ENCODE measurements at regions of chr18 and their contacts with region 1.

Region 1: DNA sequence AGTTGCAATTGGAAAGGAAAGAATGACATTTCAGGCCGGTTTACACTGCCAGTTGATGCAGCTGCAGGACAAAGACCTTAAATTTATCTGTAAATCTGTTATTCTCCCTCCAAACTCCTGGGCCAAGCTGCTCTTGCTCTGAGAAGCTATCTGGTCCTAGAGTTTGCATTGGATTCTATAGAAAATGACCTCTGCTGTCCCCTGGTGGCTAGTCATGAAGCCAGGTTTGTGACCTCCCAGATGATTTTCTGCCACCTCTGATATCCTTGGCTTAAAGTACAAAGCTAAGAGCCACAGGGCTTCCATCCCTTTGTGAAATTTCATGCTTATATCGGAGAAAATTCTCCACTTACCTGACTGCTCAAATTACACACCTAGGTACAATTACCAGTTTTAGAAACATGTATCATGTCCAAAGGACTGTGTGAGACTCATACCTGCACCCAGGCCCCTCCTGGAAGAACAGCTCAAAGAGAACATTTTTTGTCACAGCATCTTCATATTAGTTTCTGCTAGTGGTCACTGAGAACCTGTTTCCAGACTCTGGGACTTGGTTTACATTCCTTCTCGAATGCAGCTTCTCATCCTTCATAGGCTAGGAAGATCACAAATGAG is 28.9 kb upstream of the IER3IP1 start:
- DNase-seq: peak; percentile 53
- H3K4me3 Mint-ChIP-seq: no peak overlapping the region
- H3K27ac Mint-ChIP-seq: no peak overlapping the region
- H3K4me1 Mint-ChIP-seq: no peaks in the 10 kb centered on the region
- H3K27me3 Mint-ChIP-seq: peaks cover 3% of the 10 kb centered on the region

Region 2: GRCh38 chr18:47050468-47050867 is 154.5 kb before region 1 on chr18:
- CTCF ChIA-PET with region 1: interaction called, 11 read pairs
- DNase-seq: no peak
- H3K4me3 Mint-ChIP-seq: no peak overlapping the region
- H3K27ac Mint-ChIP-seq: no peak overlapping the region
- H3K4me1 Mint-ChIP-seq: no peaks in the 10 kb centered on the region
- H3K27me3 Mint-ChIP-seq: peaks cover 9% of the 10 kb centered on the region

Region 3: GRCh38 chr18:47100214-47100831 is 104.7 kb before region 1 on chr18:
- CTCF ChIA-PET with region 1: interaction called, 44 read pairs
- DNase-seq: peak; percentile 72
- H3K4me3 Mint-ChIP-seq: no peak overlapping the region
- H3K27ac Mint-ChIP-seq: no peak overlapping the region
- H3K4me1 Mint-ChIP-seq: no peaks in the 10 kb centered on the region
- H3K27me3 Mint-ChIP-seq: no peaks in the 10 kb centered on the region

Region 4: GRCh38 chr18:47191961-47192360 is 13.1 kb before region 1 on chr18:
- CTCF ChIA-PET with region 1: interaction called, 11 read pairs
- DNase-seq: no peak
- H3K4me3 Mint-ChIP-seq: no peak overlapping the region
- H3K27ac Mint-ChIP-seq: no peak overlapping the region
- H3K4me1 Mint-ChIP-seq: no peaks in the 10 kb centered on the region
- H3K27me3 Mint-ChIP-seq: peaks cover 13% of the 10 kb centered on the region

Region 5: GRCh38 chr18:47215554-47216138 is 10.6 kb after region 1 on chr18:
- CTCF ChIA-PET with region 1: interaction called, 11 read pairs
- DNase-seq: peak; percentile 34
- H3K4me3 Mint-ChIP-seq: no peak overlapping the region
- H3K27ac Mint-ChIP-seq: no peak overlapping the region
- H3K4me1 Mint-ChIP-seq: no peaks in the 10 kb centered on the region
- H3K27me3 Mint-ChIP-seq: peaks cover 16% of the 10 kb centered on the region

Region 6: DNA sequence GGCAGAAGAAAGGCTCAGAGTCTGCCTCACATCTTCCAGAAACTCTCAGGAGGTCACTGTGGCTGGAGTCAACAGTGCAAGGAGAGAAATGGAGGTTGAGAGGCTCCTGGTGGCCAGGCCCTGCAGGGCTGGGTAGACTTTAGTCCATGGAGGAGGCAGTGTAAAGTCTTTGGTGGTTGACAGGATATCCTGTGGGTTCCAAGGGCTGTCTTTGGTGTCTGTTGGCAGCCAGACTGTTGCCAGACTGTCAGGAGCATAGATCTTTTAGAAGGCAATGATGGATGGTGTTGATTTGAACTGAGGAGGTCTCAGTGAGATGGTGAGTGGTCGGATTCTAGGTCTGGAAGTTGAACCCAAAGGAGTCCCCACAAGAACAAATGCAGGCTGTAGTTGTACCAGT is 91.4 kb after region 1 on chr18:
- CTCF ChIA-PET with region 1: no interaction called
- DNase-seq: no peak
- H3K4me3 Mint-ChIP-seq: no peak overlapping the region
- H3K27ac Mint-ChIP-seq: no peak overlapping the region
- H3K4me1 Mint-ChIP-seq: no peaks in the 10 kb centered on the region
- H3K27me3 Mint-ChIP-seq: peaks cover 10% of the 10 kb centered on the region

Region 7: DNA sequence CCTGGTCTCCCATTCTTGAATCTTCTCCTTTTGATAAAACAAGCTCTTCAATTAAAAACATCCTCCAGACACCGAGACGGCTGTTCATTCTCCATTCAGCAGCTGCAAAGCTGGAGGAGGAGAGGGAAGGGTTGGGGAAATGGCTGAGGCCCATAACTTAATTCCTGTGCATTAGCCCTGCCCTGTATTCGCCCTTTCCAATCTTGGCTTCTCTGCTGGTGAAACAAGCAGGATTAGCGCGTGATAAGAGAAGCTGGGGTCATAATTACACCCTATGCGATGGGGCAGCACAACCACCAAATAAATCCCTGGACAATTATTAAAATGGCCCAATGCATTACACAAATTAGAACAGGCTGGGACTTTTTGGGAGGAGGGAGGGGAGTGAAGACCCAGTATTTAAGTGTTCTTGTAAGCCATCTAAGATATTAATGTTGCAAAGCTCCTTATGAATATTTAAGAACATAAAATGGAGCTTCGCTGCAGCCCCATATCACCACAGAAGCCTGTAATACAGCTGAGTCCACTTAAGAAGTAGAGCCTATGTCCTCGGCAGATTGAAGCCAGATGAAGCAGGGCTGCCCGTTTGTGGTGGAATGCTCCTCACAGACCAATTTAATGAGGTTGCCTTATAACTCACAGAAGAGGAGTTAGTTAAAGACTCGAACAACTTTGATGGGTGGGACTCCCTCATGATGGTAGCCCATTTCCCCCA is 223.1 kb after region 1 on chr18:
- CTCF ChIA-PET with region 1: no interaction called
- DNase-seq: no peak
- H3K4me3 Mint-ChIP-seq: no peak overlapping the region
- H3K27ac Mint-ChIP-seq: no peak overlapping the region
- H3K4me1 Mint-ChIP-seq: no peaks in the 10 kb centered on the region
- H3K27me3 Mint-ChIP-seq: peaks cover 3% of the 10 kb centered on the region

Measured in activated naive CD4-positive, alpha-beta T cell treated with anti-CD3 and anti-CD28 coated beads, Interleukin-2, amount 10 ng/mL, durations not matched to agents 7 days and 5 days (primary cell).